Naive thymus-derived CD4-positive, alpha-beta T cell (primary cell): ENCODE measurements at regions of chr19 and their contacts with region 1.

Region 1: GRCh38 chr19:3762501-3763459 is at the start of gene MRPL54:
- DNase-seq: peak; percentile 98 to 100 (median 100)
- ATAC-seq: peak; percentile 89
- H3K4me3 ChIP-seq: peak within 1 kb of the TSS; percentile 96
- H3K4me3 Mint-ChIP-seq: peak within 1 kb of the TSS; percentile 93 to 99 (median 98)
- H3K27ac ChIP-seq: peak within 1 kb of the TSS; percentile 100
- H3K27ac Mint-ChIP-seq: peak within 1 kb of the TSS; percentile 99 to 100 (median 100)
- H3K4me1 ChIP-seq: peaks cover 19 to 44% of the 10 kb centered on the region in 2 donors
- H3K4me1 Mint-ChIP-seq: peaks cover 23 to 59% (median 39%) of the 10 kb centered on the region in 7 donors
- H3K27me3 ChIP-seq: no peaks in the 10 kb centered on the region
- H3K27me3 Mint-ChIP-seq: peaks cover 0 to 5% (median 0%) of the 10 kb centered on the region in 5 donors
- total RNA-seq, gene MRPL54: 34.0 to 95.2 (median 58.8) TPM

Region 2: DNA sequence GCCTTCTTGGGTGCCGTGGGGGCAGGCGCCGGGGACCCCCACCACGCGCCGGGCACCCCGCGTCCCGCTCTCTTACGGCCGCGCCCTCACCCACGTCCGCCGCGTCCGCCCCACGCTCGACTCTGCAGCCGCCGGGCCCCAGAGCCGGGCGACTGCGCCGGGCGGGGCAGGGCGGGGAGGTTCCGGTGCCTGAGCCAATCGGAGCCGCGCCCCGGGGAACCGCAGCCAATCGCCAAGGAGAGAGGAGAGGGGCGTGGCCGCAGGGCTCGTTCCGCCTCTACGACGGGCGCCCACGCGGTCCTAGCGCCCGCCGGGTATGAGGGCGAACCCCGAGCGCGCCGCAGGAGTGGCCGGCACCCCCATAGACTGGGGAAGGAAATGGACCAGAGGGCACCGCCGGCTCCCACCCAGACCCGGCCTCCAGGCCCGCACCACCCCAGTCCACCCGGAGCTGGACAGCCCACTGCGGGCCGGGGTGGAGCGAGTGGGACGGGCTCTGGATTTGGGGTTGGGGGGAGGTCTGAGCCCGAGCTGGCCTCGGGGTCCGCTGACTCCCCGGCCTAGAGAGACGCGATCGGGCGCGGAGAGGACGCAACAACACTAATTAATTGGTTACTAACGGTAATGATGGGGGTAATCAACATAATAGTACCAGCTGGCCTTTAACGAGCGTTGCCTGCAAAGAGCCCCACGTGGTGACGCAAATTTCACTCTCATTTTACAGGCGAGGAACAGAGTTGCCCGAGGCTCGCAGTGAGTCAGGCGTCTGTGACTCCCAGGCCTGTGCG is 205.1 kb before region 1 on chr19 and contains the start of gene MFSD12:
- CTCF ChIA-PET with region 1: interaction called, 3 read pairs
- POLR2A ChIA-PET with region 1: interaction called, 5 read pairs
- intact Hi-C with region 1: loop called in 1 of 2 experiments (anchors 10 kb)
- DNase-seq: peak; percentile 88 to 98 (median 93)
- ATAC-seq: peak; percentile 94
- H3K4me3 ChIP-seq: peak within 1 kb of the TSS; percentile 90
- H3K4me3 Mint-ChIP-seq: peak within 1 kb of the TSS; percentile 92 to 100 (median 96)
- H3K27ac ChIP-seq: peak within 1 kb of the TSS; percentile 83
- H3K27ac Mint-ChIP-seq: peak within 1 kb of the TSS; percentile 92 to 97 (median 95)
- H3K4me1 ChIP-seq: peaks cover 25 to 30% of the 10 kb centered on the region in 2 donors
- H3K4me1 Mint-ChIP-seq: peaks cover 18 to 40% (median 38%) of the 10 kb centered on the region in 7 donors
- H3K27me3 ChIP-seq: no peaks in the 10 kb centered on the region
- H3K27me3 Mint-ChIP-seq: no peaks in the 10 kb centered on the region
- total RNA-seq, gene MFSD12: 95.2 to 153 (median 101) TPM

Region 3: GRCh38 chr19:3721131-3721886 is 41.5 kb before region 1 on chr19:
- CTCF ChIA-PET with region 1: interaction called, 9 read pairs
- POLR2A ChIA-PET with region 1: interaction called, 15 read pairs
- intact Hi-C with region 1: loop called in 1 of 2 experiments (anchors 1 kb)
- DNase-seq: peak; percentile 72 to 88 (median 83)
- ATAC-seq: peak; percentile 99
- H3K4me3 ChIP-seq: peak overlapping the region; percentile 61
- H3K4me3 Mint-ChIP-seq: peak overlapping the region; percentile 68 to 87 (median 81)
- H3K27ac ChIP-seq: no peak overlapping the region
- H3K27ac Mint-ChIP-seq: peak overlapping the region in 1 of 9 donors; percentile 4
- H3K4me1 ChIP-seq: peaks cover 9 to 15% of the 10 kb centered on the region in 2 donors
- H3K4me1 Mint-ChIP-seq: peaks cover 0 to 21% (median 8%) of the 10 kb centered on the region in 7 donors
- H3K27me3 ChIP-seq: peaks cover 0 to 3% of the 10 kb centered on the region in 2 donors
- H3K27me3 Mint-ChIP-seq: peaks cover 0 to 54% (median 0%) of the 10 kb centered on the region in 5 donors

Region 4: GRCh38 chr19:3821857-3822364 is 59.1 kb after region 1 on chr19:
- CTCF ChIA-PET with region 1: interaction called, 20 read pairs
- POLR2A ChIA-PET with region 1: interaction called, 43 read pairs
- intact Hi-C with region 1: loop called (anchors 1 kb)
- DNase-seq: peak; percentile 76 to 96 (median 89)
- ATAC-seq: peak; percentile 99
- H3K4me3 ChIP-seq: peak overlapping the region; percentile 3
- H3K4me3 Mint-ChIP-seq: peak overlapping the region in 7 of 10 donors; percentile 31 to 71 (median 66)
- H3K27ac ChIP-seq: no peak overlapping the region
- H3K27ac Mint-ChIP-seq: peak overlapping the region in 8 of 9 donors; percentile 20 to 81 (median 57)
- H3K4me1 ChIP-seq: peaks cover 0 to 13% of the 10 kb centered on the region in 2 donors
- H3K4me1 Mint-ChIP-seq: peaks cover 0 to 32% (median 18%) of the 10 kb centered on the region in 7 donors
- H3K27me3 ChIP-seq: no peaks in the 10 kb centered on the region
- H3K27me3 Mint-ChIP-seq: no peaks in the 10 kb centered on the region

Region 5: DNA sequence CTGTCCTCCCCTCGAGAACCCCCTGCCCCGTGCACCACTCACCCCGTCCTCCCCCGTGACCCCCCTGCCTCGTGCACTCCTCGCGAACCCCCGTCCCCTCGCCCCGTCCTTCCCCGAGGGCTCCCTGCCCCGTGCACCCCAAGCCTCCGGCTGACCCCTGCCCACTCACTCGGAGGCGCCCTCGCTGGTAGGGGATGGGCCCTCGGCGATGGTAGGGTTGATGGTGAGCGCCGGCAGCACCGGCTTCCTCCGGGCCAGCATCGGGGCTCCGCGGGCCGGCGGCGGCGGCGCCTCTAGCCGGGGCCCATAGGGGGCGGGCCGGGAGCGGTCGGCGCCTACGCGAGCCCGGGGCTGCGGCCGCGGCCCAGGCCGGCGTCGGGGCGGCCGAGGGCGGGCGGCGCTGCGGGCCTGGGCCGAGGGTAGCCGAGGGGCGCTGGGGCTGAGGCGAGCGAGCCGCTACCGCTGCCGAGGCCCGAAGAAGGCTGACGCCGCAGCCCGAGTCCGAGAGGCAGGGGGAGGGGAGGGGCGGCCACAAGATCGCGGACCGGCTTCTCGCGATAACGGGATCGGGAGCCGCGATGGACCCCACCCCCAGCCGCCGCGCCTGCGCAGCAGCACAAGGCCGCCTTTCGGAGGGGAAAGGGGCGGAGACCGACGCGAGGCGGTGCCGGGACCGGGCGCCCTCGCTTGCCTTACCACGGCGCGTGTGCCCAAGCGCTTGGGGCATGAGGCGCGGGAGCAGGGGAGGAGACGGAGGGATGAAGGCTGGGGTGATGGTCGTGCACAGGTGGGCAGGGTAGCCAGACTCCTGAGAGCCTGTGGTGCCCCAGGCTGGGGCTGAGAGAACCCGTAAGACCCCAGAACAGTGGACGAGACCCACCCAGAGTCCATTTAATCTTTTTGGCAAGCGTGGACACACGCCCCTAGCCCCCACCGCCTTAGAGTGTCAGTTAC is 361.1 kb after region 1 on chr19 and contains the start of gene MAP2K2:
- CTCF ChIA-PET with region 1: no interaction called
- POLR2A ChIA-PET with region 1: no interaction called
- intact Hi-C with region 1: loop called in 1 of 2 experiments (anchors 1 kb)
- DNase-seq: peak; percentile 91 to 99 (median 96)
- ATAC-seq: peak; percentile 96
- H3K4me3 ChIP-seq: peak within 1 kb of the TSS; percentile 77
- H3K4me3 Mint-ChIP-seq: peak within 1 kb of the TSS; percentile 89 to 100 (median 94)
- H3K27ac ChIP-seq: peak within 1 kb of the TSS; percentile 80
- H3K27ac Mint-ChIP-seq: peak within 1 kb of the TSS; percentile 89 to 97 (median 93)
- H3K4me1 ChIP-seq: peaks cover 10 to 11% of the 10 kb centered on the region in 2 donors
- H3K4me1 Mint-ChIP-seq: peaks cover 17 to 31% (median 25%) of the 10 kb centered on the region in 7 donors
- H3K27me3 ChIP-seq: no peaks in the 10 kb centered on the region
- H3K27me3 Mint-ChIP-seq: no peaks in the 10 kb centered on the region
- total RNA-seq, gene MAP2K2: 87.4 to 162 (median 123) TPM

Region 6: DNA sequence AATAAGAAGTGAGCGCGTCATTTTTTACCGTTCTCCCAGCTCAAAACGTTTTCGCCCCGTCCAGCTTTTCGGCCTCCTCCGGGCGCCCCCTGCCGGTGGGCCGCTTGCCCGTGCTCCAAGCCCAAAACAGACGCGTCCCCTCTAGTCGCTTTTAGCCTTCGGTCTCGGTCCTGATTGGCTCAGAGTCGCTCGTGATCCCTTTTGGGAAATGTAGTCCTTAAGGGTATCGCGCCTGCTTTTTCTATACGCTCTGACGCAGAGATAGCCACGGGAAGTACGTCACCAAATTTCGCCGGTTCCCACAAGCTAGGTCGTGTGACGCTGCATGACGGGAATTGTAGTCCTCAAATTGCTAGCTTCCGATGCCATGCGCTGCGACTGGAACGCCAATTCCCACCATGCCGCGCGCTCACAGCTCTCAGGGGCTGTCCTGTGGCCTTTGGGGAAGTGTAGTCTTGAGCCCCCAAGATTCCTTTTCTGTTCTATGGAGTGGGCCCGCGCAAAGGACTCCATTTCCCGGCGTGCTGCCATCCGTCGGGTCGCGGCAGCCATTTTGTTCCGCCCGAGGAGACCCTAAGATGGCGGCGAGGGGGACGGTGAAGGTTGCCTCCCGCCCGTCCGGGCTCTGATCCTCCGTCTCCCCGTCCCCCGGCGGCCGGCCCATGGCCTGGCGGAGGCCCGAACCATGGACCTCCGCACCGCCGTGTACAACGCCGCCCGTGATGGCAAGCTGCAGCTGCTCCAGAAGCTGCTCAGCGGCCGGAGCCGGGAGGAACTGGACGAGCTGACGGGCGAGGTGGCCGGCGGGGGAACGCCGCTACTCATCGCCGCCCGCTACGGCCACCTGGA is 1028.6 kb after region 1 on chr19 and contains the start of gene FEM1A:
- CTCF ChIA-PET with region 1: no interaction called
- POLR2A ChIA-PET with region 1: no interaction called
- intact Hi-C with region 1: loop called in 1 of 2 experiments (anchors 5 kb)
- DNase-seq: peak; percentile 93 to 100 (median 99)
- ATAC-seq: peak; percentile 96
- H3K4me3 ChIP-seq: peak within 1 kb of the TSS; percentile 72
- H3K4me3 Mint-ChIP-seq: peak within 1 kb of the TSS; percentile 75 to 90 (median 87)
- H3K27ac ChIP-seq: peak within 1 kb of the TSS; percentile 92
- H3K27ac Mint-ChIP-seq: peak within 1 kb of the TSS; percentile 46 to 94 (median 85)
- H3K4me1 ChIP-seq: peaks cover 0 to 7% of the 10 kb centered on the region in 2 donors
- H3K4me1 Mint-ChIP-seq: peaks cover 7 to 46% (median 29%) of the 10 kb centered on the region in 7 donors
- H3K27me3 ChIP-seq: no peaks in the 10 kb centered on the region
- H3K27me3 Mint-ChIP-seq: no peaks in the 10 kb centered on the region
- total RNA-seq, gene FEM1A: 10.2 to 17.2 (median 14.4) TPM